Calu3 (cell line): ENCODE measurements at regions of chr3 and their contacts with region 1.

Region 1: GRCh38 chr3:107927361-107928083 is 163.3 kb downstream of the CD47 start:
- DNase-seq: peak; percentile 80
- H3K4me3 Mint-ChIP-seq: peak overlapping the region; percentile 80
- H3K27ac Mint-ChIP-seq: no peak overlapping the region
- H3K4me1 Mint-ChIP-seq: no peaks in the 10 kb centered on the region
- H3K27me3 Mint-ChIP-seq: no peaks in the 10 kb centered on the region
- CTCF ChIP-seq: peak; percentile 79

Region 2: DNA sequence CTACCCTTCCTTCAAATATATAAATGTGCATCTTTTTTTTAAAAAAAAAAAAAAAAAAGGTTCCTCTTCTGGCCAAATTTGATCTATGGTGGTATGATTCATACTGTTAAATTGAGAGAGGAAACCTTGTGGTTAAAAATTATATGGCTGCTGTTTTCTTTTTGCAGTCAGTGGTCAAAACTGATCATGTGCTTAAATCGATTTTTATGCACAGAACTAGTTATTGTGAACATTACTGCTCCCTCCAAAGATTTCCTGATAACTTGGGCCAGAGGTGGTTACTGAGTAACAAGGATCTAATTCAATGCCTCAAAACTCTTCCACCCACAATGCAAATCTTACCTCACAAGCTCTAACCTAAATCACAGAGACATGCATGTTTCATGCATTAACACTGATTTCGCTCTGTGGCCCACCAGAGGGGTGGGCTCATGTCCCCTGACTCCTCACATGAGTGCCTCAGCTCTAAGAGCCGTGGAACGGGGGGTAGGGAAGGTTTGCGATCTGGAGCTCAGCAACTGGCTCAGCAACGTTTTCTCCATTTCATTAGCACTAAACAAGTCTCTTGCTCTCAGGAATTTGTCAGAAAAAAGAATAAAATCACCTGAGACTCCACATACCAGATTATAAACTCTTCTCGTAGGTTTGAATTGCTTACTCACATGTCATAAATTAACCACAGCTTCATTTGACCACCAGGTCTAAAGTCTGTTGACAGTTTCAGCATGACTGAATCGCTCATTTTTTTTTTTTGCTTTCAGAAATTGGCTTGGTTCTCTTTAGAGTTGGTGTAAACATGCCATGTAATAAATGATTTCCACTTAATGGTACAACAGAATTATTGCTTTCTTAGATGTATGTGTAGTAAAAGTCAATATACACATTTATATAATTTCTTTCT is 117.1 kb before region 1 on chr3:
- CTCF ChIA-PET with region 1: no interaction called
- intact Hi-C with region 1: loop called (anchors 1 kb)
- DNase-seq: peak; percentile 35
- H3K4me3 Mint-ChIP-seq: peak overlapping the region; percentile 78
- H3K27ac Mint-ChIP-seq: peak overlapping the region; percentile 84
- H3K4me1 Mint-ChIP-seq: peaks cover 20% of the 10 kb centered on the region
- H3K27me3 Mint-ChIP-seq: no peaks in the 10 kb centered on the region
- CTCF ChIP-seq: no peak

Region 3: GRCh38 chr3:107861904-107862303 is 65.6 kb before region 1 on chr3:
- CTCF ChIA-PET with region 1: no interaction called
- intact Hi-C with region 1: no loop called
- DNase-seq: no peak
- H3K4me3 Mint-ChIP-seq: no peak overlapping the region
- H3K27ac Mint-ChIP-seq: no peak overlapping the region
- H3K4me1 Mint-ChIP-seq: no peaks in the 10 kb centered on the region
- H3K27me3 Mint-ChIP-seq: no peaks in the 10 kb centered on the region
- CTCF ChIP-seq: no peak

Region 4: GRCh38 chr3:107987036-107987947 is 59.8 kb after region 1 on chr3:
- CTCF ChIA-PET with region 1: no interaction called
- intact Hi-C with region 1: loop called (anchors 5 kb)
- DNase-seq: peak; percentile 71
- H3K4me3 Mint-ChIP-seq: no peak overlapping the region
- H3K27ac Mint-ChIP-seq: peak overlapping the region; percentile 60
- H3K4me1 Mint-ChIP-seq: peaks cover 51% of the 10 kb centered on the region
- H3K27me3 Mint-ChIP-seq: no peaks in the 10 kb centered on the region
- CTCF ChIP-seq: no peak